ENCODE measurements at regions of chr6 and their contacts with region 1.

Region 1: GRCh38 chr6:163413345-163414116 is 987 bp upstream of the QKI start:
- ATAC-seq: peak; percentile 38 to 76 (median 70)
- H3K4me3 ChIP-seq: peak overlapping the region; percentile 45 to 85 (median 74)
- H3K27ac ChIP-seq: peak overlapping the region; percentile 92 to 99
- H3K4me1 ChIP-seq: peaks cover 0 to 4% of the 10 kb centered on the region in 2 donors

Region 2: DNA sequence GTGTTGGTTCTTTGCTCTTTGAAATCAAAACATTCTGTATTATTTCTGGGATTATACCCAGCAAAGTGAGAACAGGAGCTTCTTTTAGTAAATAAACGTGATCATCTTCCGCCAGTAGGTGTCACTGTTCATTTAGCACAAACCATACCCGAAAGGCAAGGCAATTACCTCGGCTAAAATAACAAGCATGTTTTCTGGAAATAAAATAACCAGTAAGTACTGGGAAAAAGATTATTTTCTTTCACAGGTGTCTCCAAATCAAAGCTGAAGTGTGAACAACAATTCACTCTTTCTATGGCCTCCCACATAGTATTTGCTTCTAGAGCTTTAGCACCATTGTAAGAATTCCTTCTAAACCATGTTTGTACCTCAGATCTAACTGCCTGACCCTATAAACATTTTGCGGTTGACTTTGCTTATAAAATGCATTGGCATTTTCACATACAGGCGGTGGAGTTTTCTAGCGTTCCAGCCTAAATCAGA is 1995.0 kb before region 1 on chr6:
- in situ Hi-C with region 1: loop called in 1 of 9 experiments (anchors 25 kb)
- ATAC-seq: peak in 7 of 8 experiments; percentile 44 to 87 (median 65)
- H3K4me3 ChIP-seq: no peak overlapping the region
- H3K27ac ChIP-seq: no peak overlapping the region
- H3K4me1 ChIP-seq: peaks cover 24 to 27% of the 10 kb centered on the region in 2 donors

Region 3: GRCh38 chr6:162856885-162857284 is 556.6 kb before region 1 on chr6:
- in situ Hi-C with region 1: loop called in 4 of 9 experiments (anchors 25 kb)
- ATAC-seq: peak; percentile 87 to 99 (median 94)
- H3K4me3 ChIP-seq: peak overlapping the region in 4 of 5 donors; percentile 3 to 31 (median 23)
- H3K27ac ChIP-seq: peak overlapping the region; percentile 80 to 86
- H3K4me1 ChIP-seq: peaks cover 51 to 60% of the 10 kb centered on the region in 2 donors

Region 4: GRCh38 chr6:163019926-163020325 is 393.6 kb before region 1 on chr6:
- in situ Hi-C with region 1: no loop called
- ATAC-seq: no peak
- H3K4me3 ChIP-seq: no peak overlapping the region
- H3K27ac ChIP-seq: no peak overlapping the region
- H3K4me1 ChIP-seq: no peaks in the 10 kb centered on the region

Region 5: GRCh38 chr6:163165922-163166321 is 247.6 kb before region 1 on chr6:
- in situ Hi-C with region 1: no loop called
- ATAC-seq: no peak
- H3K4me3 ChIP-seq: no peak overlapping the region
- H3K27ac ChIP-seq: no peak overlapping the region
- H3K4me1 ChIP-seq: no peaks in the 10 kb centered on the region

Region 6: GRCh38 chr6:163180874-163181541 is 232.5 kb before region 1 on chr6:
- in situ Hi-C with region 1: loop called in 1 of 9 experiments (anchors 25 kb)
- ATAC-seq: peak; percentile 88 to 95 (median 94)
- H3K4me3 ChIP-seq: no peak overlapping the region
- H3K27ac ChIP-seq: peak overlapping the region; percentile 1 to 55
- H3K4me1 ChIP-seq: peaks cover 18 to 34% of the 10 kb centered on the region in 2 donors

Region 7: DNA sequence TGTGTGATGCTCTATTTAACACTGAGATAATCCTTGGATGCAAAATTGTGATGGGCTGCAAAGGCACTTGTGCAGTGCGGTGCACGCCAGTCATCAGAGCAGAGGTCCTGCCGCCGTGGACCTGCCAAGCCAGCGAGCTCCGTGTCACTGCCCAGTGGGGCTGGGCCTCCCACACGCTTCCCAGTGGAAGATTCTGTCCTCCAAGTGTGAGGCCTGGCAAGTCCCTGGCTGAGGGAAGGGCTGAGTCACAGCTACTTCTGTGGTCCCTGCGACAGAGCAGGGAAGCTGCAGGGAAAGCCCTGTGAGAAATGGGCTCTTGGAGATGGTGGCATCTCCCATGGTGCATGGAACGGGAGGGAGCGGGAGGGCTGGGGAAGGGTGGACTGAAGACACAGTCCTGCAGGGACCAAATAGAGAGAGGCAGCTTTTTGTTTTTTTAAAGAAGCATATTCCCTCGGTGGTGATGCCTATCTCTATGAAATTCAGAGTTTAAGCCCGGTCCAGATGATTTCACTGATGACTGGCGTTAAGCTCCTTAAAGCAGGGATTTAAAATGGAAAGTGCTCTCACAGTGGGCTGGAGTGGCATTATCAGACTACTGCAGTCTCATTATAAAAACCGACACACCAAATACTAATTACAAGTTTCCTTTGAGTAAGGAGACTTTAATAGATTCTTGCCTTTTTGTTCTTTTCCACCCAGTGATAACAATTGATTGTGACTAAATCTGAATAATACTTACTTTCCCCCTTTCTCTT is 414.7 kb after region 1 on chr6:
- in situ Hi-C with region 1: no loop called
- ATAC-seq: peak in 6 of 8 experiments; percentile 77 to 88 (median 82)
- H3K4me3 ChIP-seq: no peak overlapping the region
- H3K27ac ChIP-seq: peak overlapping the region; percentile 3 to 37
- H3K4me1 ChIP-seq: peaks cover 17 to 34% of the 10 kb centered on the region in 2 donors

Region 8: GRCh38 chr6:164911873-164912580 is 1498.5 kb after region 1 on chr6:
- in situ Hi-C with region 1: loop called in 1 of 9 experiments (anchors 25 kb)
- ATAC-seq: peak in 7 of 8 experiments; percentile 52 to 81 (median 63)
- H3K4me3 ChIP-seq: no peak overlapping the region
- H3K27ac ChIP-seq: no peak overlapping the region
- H3K4me1 ChIP-seq: peaks cover 9 to 24% of the 10 kb centered on the region in 2 donors

Region 9: GRCh38 chr6:165231581-165232561 is 1818.3 kb after region 1 on chr6:
- in situ Hi-C with region 1: loop called in 2 of 9 experiments (anchors 25 kb)
- ATAC-seq: peak; percentile 53 to 90 (median 80)
- H3K4me3 ChIP-seq: no peak overlapping the region
- H3K27ac ChIP-seq: peak overlapping the region; percentile 37 to 42
- H3K4me1 ChIP-seq: peaks cover 30 to 34% of the 10 kb centered on the region in 2 donors